Caco-2 (cell line): ENCODE measurements at regions of chr20 and their contacts with region 1.

Region 1: GRCh38 chr20:46559685-46560440 is 9.4 kb upstream of the OCSTAMP start:
- DNase-seq: peak in 1 of 2 experiments; percentile 34
- H3K4me3 ChIP-seq: no peak overlapping the region
- H3K4me3 Mint-ChIP-seq: no peak overlapping the region
- H3K27ac Mint-ChIP-seq: no peak overlapping the region
- H3K4me1 ChIP-seq: no peaks in the 10 kb centered on the region
- H3K4me1 Mint-ChIP-seq: no peaks in the 10 kb centered on the region
- H3K27me3 ChIP-seq: no peaks in the 10 kb centered on the region
- H3K27me3 Mint-ChIP-seq: peaks cover 5% of the 10 kb centered on the region
- CTCF ChIP-seq: peak; percentile 44 to 47

Region 2: DNA sequence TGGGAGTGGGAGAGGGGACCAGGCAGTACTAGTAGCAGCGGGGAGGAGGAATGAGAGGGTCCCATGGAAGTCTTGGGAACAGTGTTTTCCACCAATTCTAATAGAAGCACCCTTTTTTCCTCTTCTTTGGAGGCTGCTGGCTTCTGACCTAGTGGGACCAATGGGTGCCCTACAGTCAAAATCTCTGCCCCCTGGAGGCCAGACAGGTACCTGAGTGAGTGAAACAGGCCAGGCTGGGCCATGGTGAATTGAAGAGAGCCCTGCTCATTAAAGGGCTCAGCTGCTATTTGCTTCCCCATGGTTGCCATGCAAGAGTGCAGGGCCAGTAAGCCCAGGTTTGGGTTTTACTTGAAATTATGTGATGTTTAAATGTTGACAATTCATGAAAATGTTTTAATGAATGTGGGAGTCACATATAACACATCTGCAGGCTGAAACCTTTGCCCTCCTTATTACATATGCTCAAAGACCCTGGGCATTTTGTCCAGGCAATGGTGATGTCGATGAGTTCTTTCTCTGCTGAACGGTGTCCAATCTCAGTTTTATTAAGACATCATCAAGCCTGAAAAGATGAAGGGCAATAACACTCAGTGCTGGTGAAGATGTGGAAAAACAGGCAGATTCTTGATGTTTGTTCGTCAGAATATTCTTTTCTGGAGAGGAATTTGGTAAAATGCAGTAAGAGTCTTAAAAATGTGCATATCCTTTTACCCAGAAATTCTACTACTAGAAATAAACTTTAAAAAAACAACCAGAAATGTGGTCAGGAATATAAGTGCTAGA is 32.9 kb after region 1 on chr20:
- CTCF ChIA-PET with region 1: no interaction called
- POLR2A ChIA-PET with region 1: no interaction called
- intact Hi-C with region 1: no loop called
- DNase-seq: peak in 1 of 2 experiments; percentile 53
- H3K4me3 ChIP-seq: no peak overlapping the region
- H3K4me3 Mint-ChIP-seq: no peak overlapping the region
- H3K27ac Mint-ChIP-seq: no peak overlapping the region
- H3K4me1 ChIP-seq: no peaks in the 10 kb centered on the region
- H3K4me1 Mint-ChIP-seq: no peaks in the 10 kb centered on the region
- H3K27me3 ChIP-seq: 0 out of 2 replicates have a peak, but pooled peaks cover 2% of the 10 kb centered on the region
- H3K27me3 Mint-ChIP-seq: peaks cover 14% of the 10 kb centered on the region
- CTCF ChIP-seq: peak; percentile 46 to 48

Region 3: DNA sequence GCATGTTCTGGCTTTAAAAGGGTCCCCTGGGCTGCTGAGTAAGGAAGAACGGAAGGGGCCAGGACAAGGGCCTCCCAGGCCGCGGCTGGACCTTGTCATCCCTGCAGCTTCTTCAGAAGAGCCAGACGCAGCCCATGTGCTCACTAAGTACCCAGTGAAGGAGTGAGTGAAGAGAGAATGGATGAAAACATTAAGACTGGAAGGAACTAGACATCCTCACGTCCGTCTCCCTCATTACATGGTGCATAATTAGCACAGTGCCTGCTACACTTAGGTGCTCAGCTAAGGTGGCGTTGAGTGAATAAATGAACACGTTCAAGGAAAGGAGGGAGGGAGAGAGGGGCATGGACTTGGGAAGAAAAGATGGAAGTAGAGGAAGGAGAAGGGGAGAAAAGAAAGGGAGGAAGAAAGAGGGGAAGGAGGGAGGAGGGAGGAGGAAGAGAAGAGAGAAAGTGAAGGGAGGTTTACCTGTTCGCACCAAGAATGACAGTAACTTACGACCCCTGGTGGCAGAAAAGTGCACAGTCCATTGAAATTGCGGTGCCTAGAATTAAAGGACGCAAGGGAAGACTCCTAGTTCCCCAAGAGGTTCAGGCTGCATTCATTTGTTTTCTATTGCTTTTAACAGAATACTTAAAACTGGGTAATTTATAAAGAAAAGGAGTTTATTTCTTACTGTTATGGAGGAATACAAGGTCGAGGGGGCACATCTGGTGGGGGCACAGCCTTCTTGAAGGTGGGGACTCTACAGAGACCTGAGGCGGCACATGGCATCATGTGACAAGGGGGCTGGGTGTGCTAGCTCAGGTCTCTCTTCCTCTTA is 121.4 kb after region 1 on chr20:
- CTCF ChIA-PET with region 1: interaction called, 6 read pairs
- POLR2A ChIA-PET with region 1: no interaction called
- intact Hi-C with region 1: loop called (anchors 1 kb)
- DNase-seq: peak; percentile 82 to 88
- H3K4me3 ChIP-seq: no peak overlapping the region
- H3K4me3 Mint-ChIP-seq: no peak overlapping the region
- H3K27ac Mint-ChIP-seq: no peak overlapping the region
- H3K4me1 ChIP-seq: no peaks in the 10 kb centered on the region
- H3K4me1 Mint-ChIP-seq: peaks cover 10% of the 10 kb centered on the region
- H3K27me3 ChIP-seq: no peaks in the 10 kb centered on the region
- H3K27me3 Mint-ChIP-seq: no peaks in the 10 kb centered on the region
- CTCF ChIP-seq: peak; percentile 94 to 98